CD8-positive, alpha-beta memory T cell (primary cell): ENCODE measurements at regions of chr7 and their contacts with region 1.

Region 1: DNA sequence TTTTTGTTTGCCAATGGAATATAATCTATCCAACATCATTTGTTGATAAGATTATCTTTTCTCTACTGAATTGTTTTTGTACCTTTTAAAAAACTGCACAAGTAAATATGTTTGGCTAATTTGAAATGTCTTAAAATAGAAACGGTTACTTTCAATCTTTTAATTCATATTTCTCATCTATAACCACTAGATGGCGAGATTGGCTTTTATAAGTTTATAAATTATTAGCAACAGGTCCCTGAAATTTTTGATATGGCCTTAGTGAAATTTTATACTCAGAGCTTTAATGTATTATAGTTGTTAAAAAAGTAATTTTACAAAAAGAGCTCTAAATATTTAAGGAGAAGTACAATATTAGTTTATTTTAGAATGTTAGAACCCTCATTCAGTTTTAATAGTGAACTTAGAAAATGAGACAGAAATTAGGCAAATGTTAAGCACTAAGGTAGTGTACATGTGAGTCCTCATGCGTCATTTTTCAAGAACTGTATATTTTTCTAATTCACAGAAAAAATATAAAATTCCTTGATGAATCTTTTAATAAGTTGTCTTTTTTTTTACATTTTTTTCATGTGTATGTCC is 592.5 kb downstream of the ARL4A start:
- DNase-seq: peak in 1 of 5 donors; percentile 13
- H3K4me3 ChIP-seq: no peak overlapping the region
- H3K4me3 Mint-ChIP-seq: no peak overlapping the region
- H3K27ac ChIP-seq: no peak overlapping the region
- H3K27ac Mint-ChIP-seq: no peak overlapping the region
- H3K4me1 ChIP-seq: no peaks in the 10 kb centered on the region
- H3K4me1 Mint-ChIP-seq: no peaks in the 10 kb centered on the region
- H3K27me3 ChIP-seq: no peaks in the 10 kb centered on the region
- H3K27me3 Mint-ChIP-seq: peaks cover 1 to 16% of the 10 kb centered on the region in 2 donors

Region 2: GRCh38 chr7:13139436-13139835 is 140.5 kb before region 1 on chr7:
- CTCF ChIA-PET with region 1: no interaction called
- POLR2A ChIA-PET with region 1: no interaction called
- DNase-seq: no peak
- H3K4me3 ChIP-seq: no peak overlapping the region
- H3K4me3 Mint-ChIP-seq: no peak overlapping the region
- H3K27ac ChIP-seq: no peak overlapping the region
- H3K27ac Mint-ChIP-seq: no peak overlapping the region
- H3K4me1 ChIP-seq: no peaks in the 10 kb centered on the region
- H3K4me1 Mint-ChIP-seq: no peaks in the 10 kb centered on the region
- H3K27me3 ChIP-seq: no peaks in the 10 kb centered on the region
- H3K27me3 Mint-ChIP-seq: peaks cover 0 to 8% of the 10 kb centered on the region in 2 donors

Region 3: GRCh38 chr7:13225068-13225467 is 54.9 kb before region 1 on chr7:
- CTCF ChIA-PET with region 1: no interaction called
- POLR2A ChIA-PET with region 1: no interaction called
- DNase-seq: no peak
- H3K4me3 ChIP-seq: no peak overlapping the region
- H3K4me3 Mint-ChIP-seq: no peak overlapping the region
- H3K27ac ChIP-seq: no peak overlapping the region
- H3K27ac Mint-ChIP-seq: no peak overlapping the region
- H3K4me1 ChIP-seq: no peaks in the 10 kb centered on the region
- H3K4me1 Mint-ChIP-seq: no peaks in the 10 kb centered on the region
- H3K27me3 ChIP-seq: no peaks in the 10 kb centered on the region
- H3K27me3 Mint-ChIP-seq: peaks cover 0 to 1% of the 10 kb centered on the region in 2 donors

Region 4: GRCh38 chr7:14351167-14351566 is 1071.2 kb after region 1 on chr7:
- CTCF ChIA-PET with region 1: no interaction called
- POLR2A ChIA-PET with region 1: no interaction called
- DNase-seq: no peak
- H3K4me3 ChIP-seq: no peak overlapping the region
- H3K4me3 Mint-ChIP-seq: no peak overlapping the region
- H3K27ac ChIP-seq: no peak overlapping the region
- H3K27ac Mint-ChIP-seq: peak overlapping the region in 1 of 8 donors; percentile 15
- H3K4me1 ChIP-seq: no peaks in the 10 kb centered on the region
- H3K4me1 Mint-ChIP-seq: no peaks in the 10 kb centered on the region
- H3K27me3 ChIP-seq: no peaks in the 10 kb centered on the region
- H3K27me3 Mint-ChIP-seq: no peaks in the 10 kb centered on the region

Region 5: DNA sequence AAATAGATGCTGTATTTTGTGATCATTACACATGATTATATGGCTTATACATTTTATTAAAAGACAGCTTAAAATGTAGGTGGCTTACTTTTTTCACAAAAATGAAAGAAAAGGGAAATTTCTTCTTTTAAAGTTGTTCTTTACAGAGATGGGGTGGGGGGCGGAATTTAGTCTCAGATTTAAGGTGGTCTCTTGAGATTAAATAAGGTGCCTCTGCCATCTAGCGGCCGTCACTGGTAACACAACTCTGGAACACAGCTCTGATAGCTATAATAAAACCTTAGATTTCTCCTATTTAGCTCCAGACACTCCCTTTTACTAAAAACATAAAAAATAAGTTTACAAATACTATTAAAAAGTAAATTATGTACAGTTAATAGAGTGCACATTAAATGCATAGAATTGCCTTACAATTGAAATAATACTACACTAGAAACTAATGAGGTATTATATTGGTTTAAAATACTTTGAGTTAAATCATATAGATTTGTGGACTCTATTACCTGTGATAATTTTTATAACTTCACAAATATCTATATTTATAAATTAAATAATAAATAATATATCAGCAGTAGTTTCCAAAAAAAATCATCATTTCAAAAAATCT is 1411.8 kb after region 1 on chr7:
- CTCF ChIA-PET with region 1: interaction called, 25 read pairs
- POLR2A ChIA-PET with region 1: no interaction called
- DNase-seq: peak; percentile 3 to 53 (median 30)
- H3K4me3 ChIP-seq: no peak overlapping the region
- H3K4me3 Mint-ChIP-seq: no peak overlapping the region
- H3K27ac ChIP-seq: no peak overlapping the region
- H3K27ac Mint-ChIP-seq: no peak overlapping the region
- H3K4me1 ChIP-seq: no peaks in the 10 kb centered on the region
- H3K4me1 Mint-ChIP-seq: no peaks in the 10 kb centered on the region
- H3K27me3 ChIP-seq: no peaks in the 10 kb centered on the region
- H3K27me3 Mint-ChIP-seq: peaks cover 0 to 8% of the 10 kb centered on the region in 2 donors